ENCODE measurements at regions of chr15 and their contacts with region 1.

Region 1: GRCh38 chr15:67915461-67916374 is 75.9 kb upstream of the RNU6-1 start:
- DNase-seq: no peak
- H3K4me3 Mint-ChIP-seq: no peak overlapping the region
- H3K27ac Mint-ChIP-seq: no peak overlapping the region
- H3K4me1 Mint-ChIP-seq: peaks cover 22% of the 10 kb centered on the region
- H3K27me3 Mint-ChIP-seq: no peaks in the 10 kb centered on the region
- CTCF ChIP-seq: no peak

Region 2: GRCh38 chr15:68201153-68201878 is 285.6 kb after region 1 on chr15:
- CTCF ChIA-PET with region 1: interaction called, 14 read pairs
- intact Hi-C with region 1: no loop called
- DNase-seq: no peak
- H3K4me3 Mint-ChIP-seq: no peak overlapping the region
- H3K27ac Mint-ChIP-seq: no peak overlapping the region
- H3K4me1 Mint-ChIP-seq: peaks cover 14% of the 10 kb centered on the region
- H3K27me3 Mint-ChIP-seq: no peaks in the 10 kb centered on the region
- CTCF ChIP-seq: no peak

Measured in Calu3 (cell line).